Adrenal gland (tissue), 19 donors: ENCODE measurements at regions of chr1 and their contacts with region 1.

Region 1: GRCh38 chr1:174074757-174075156 is 52.6 kb upstream of the RC3H1 start:
- DNase-seq: no peak
- H3K4me3 ChIP-seq: no peak overlapping the region
- H3K27ac ChIP-seq: no peak overlapping the region
- H3K4me1 ChIP-seq: no peaks in the 10 kb centered on the region
- H3K27me3 ChIP-seq: no peaks in the 10 kb centered on the region
- CTCF ChIP-seq: peak; percentile 17 to 55 (median 44)
- POLR2A ChIP-seq: no peak

Region 2: DNA sequence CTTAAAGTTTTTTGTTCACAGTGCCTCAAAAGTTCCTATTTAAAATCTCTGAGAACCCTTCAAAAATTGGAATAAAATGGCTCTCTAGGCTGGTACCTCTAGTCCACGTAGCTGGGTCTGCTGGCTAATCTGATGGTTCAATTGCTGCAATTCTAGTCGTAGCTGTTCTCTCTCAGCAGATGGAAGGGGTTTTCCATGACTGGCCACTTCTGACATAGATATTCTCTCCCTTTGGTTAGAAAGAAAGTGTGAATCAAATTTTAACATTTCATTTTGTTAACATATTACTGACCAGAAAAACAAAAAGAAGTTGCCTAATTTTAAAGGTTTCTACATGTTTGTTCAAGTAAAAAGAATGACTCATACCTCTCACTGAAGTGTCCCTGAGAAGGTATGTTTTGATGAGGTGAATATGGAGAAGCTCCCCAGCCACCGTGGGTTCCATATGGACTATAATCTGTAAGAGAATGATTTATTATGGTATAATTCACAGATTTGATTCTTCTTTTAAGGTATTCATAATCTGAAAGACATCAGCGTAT is 128.3 kb before region 1 on chr1:
- intact Hi-C with region 1: no loop called
- DNase-seq: no peak
- H3K4me3 ChIP-seq: no peak overlapping the region
- H3K27ac ChIP-seq: no peak overlapping the region
- H3K4me1 ChIP-seq: no peaks in the 10 kb centered on the region
- H3K27me3 ChIP-seq: no peaks in the 10 kb centered on the region
- CTCF ChIP-seq: no peak
- POLR2A ChIP-seq: no peak

Region 3: DNA sequence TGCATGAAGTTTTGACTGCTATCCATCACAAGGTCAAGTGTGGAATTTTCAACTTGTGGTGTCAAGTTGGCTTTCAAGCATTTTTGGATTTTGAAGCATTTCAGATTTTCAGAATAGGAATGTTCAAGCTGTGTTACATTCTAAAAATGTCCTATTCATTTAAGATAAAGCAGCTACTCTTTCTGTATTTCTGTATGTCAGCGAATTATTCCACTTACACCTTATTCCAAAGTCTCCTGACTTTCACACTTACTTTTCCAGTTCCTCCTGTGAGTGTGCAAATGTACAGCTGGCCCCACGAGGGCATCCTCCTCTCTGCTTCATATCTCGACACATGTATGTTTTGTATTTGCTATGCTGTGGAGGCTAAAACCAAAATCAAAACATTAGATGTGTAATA is 104.5 kb before region 1 on chr1:
- intact Hi-C with region 1: loop called in 1 of 2 experiments (anchors 10 kb)
- DNase-seq: no peak
- H3K4me3 ChIP-seq: no peak overlapping the region
- H3K27ac ChIP-seq: no peak overlapping the region
- H3K4me1 ChIP-seq: no peaks in the 10 kb centered on the region
- H3K27me3 ChIP-seq: no peaks in the 10 kb centered on the region
- CTCF ChIP-seq: no peak
- POLR2A ChIP-seq: no peak